Posterior cingulate gyrus (tissue), 11 donors: ENCODE measurements at regions of chr16 and their contacts with region 1.

Region 1: DNA sequence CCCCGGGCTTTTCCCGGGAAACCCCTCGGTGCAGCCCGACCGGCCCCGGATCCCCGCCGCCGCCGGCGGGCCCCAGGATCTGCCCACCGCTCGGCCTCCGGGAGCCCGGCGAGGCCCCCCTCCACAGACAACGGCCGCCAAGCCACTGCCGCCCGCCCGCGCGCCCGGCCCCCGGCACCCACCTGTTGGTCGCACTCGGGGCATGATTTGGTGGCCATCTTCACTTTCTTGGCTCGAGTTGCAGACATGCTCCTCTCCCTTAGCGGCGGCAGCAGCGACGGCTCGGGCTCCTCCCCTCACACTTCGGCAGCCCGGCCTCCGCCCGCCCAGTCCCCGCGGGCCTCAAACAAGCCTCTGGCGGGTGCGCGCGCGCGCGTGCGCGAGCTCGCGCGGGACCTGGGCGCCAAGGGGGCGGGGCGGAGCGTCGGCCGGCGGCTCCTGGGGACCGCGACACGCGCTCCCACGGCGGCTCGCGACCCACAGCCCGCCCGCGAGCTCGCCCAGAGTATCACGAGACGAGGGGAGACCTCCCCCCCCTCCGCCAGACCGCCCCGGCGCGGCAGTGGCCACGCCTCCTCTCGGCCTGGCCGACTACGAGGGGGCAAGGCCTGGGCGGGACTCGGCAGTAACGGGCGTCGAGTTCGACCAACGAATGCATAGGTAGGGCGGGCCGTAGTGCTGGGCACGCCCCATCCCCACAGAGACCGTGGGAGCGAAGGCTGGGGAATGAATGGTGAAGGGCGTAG is at the start of gene C16orf87:
- DNase-seq: peak; percentile 86 to 99 (median 94)

Region 2: GRCh38 chr16:46689365-46690280 is 141.5 kb before region 1 on chr16 and contains the start of gene ORC6:
- intact Hi-C with region 1: loop called (anchors 1 kb)
- DNase-seq: peak; percentile 96 to 100 (median 98)

Region 3: DNA sequence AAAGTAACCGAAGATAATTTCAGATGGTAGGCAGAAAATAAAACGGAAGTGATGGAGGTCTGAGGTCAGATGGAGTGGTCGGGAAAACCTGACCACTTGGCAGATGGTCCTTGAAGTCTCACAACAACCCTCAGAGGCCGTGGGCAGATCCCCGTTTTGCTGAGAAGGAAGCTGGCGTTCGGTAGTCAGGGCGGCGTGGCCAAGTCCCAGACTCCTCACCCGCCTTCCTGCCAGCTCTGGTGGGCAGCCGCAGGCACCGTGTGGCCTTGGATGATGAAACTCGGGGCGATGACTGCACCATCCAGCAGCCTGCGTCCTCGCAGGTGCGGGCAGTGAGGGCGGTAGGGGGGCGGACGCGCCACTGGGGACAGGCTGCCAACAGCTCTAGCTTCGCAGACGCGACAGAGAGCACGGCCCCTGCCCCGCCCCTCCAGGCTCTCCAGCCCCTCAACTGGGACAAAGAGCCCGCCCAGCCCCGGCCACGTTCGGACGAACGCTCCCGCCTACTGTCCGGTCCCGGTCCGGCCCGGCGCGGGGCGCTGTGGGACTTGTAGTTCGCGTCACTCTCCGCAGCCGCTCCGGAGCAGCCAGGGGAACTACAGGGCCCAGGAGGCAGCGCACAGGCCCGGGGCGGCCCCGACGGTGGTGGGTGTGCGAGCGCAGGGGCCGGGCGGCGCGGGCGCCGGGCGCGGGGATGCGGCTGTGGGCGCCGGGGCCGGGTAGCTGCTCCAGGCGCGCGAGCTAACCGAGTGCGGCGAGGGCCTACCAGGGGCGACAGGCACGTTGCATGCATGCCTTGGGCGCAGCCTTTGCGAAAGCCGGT is 52.8 kb after region 1 on chr16 and contains the start of gene GPT2:
- intact Hi-C with region 1: loop called (anchors 2 kb)
- DNase-seq: peak; percentile 96 to 100 (median 99)

Region 4: GRCh38 chr16:46908540-46909372 is 77.7 kb after region 1 on chr16:
- intact Hi-C with region 1: no loop called
- DNase-seq: peak in 4 of 10 donors; percentile 41 to 63 (median 52)